Heart left ventricle (tissue), 16 donors: ENCODE measurements at regions of chr3 and their contacts with region 1.

Region 1: GRCh38 chr3:16516695-16517481 is 3.4 kb upstream of the RFTN1 start:
- DNase-seq: peak in 4 of 5 donors; percentile 40 to 61 (median 44)
- ATAC-seq: peak; percentile 23 to 49 (median 35)
- H3K4me3 ChIP-seq: no peak overlapping the region
- H3K27ac ChIP-seq: peak overlapping the region; percentile 8 to 91 (median 65)
- H3K4me1 ChIP-seq: peaks cover 3 to 55% (median 25%) of the 10 kb centered on the region in 12 donors
- H3K27me3 ChIP-seq: no peaks in the 10 kb centered on the region
- CTCF ChIP-seq: peak; percentile 24 to 69 (median 60)
- POLR2A ChIP-seq: no peak

Region 2: DNA sequence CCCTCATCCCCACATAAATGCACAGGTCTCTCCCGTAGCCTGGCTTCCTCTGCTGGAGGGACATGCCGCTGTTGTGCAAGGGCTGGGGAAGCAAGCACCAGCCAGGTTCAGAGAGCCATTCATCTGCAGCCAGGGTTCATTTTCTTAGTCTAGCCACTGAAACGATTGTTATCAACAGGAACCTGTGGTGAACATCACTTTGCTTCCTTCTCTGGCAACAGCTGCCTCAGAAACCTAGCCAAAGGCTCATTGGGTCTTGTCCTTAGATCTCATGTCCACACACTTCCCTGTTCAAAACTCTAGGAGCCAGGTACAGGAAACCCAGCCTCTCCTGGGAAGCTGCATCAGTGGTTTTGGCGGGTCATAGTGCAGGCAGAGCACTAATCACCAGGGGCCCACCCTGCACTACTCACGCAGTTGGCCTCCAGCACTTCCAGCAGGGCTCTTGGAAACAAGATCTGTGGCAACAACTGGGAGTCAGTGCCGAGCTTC is 204.9 kb before region 1 on chr3:
- intact Hi-C with region 1: loop called in 1 of 10 experiments (anchors 1 kb)
- DNase-seq: peak in 4 of 5 donors; percentile 34 to 66 (median 61)
- ATAC-seq: peak; percentile 80 to 94 (median 86)
- H3K4me3 ChIP-seq: no peak overlapping the region
- H3K27ac ChIP-seq: peak overlapping the region; percentile 9 to 80 (median 60)
- H3K4me1 ChIP-seq: peaks cover 0 to 56% (median 11%) of the 10 kb centered on the region in 12 donors
- H3K27me3 ChIP-seq: no peaks in the 10 kb centered on the region
- CTCF ChIP-seq: no peak
- POLR2A ChIP-seq: no peak

Region 3: DNA sequence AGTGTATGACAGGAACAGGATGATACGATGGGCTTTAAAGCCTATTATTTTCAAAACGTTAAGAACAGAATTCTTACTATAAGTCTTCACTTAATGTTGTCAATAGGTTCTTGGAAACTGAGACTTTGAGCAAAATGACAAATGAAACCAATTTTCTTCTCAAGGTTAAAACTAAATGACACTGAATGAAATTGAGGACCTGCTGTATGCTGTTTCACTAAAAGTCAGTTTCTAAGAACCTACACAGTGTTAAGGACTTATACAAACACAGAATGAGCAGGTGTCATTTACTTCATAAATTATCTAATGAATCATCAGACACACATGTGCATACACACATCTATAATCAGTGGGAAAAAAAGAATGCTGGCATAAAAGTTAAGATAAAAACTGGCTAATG is 110.3 kb before region 1 on chr3:
- intact Hi-C with region 1: no loop called
- DNase-seq: no peak
- ATAC-seq: no peak
- H3K4me3 ChIP-seq: no peak overlapping the region
- H3K27ac ChIP-seq: no peak overlapping the region
- H3K4me1 ChIP-seq: peaks cover 0 to 23% (median 9%) of the 10 kb centered on the region in 12 donors
- H3K27me3 ChIP-seq: no peaks in the 10 kb centered on the region
- CTCF ChIP-seq: no peak
- POLR2A ChIP-seq: no peak

Region 4: DNA sequence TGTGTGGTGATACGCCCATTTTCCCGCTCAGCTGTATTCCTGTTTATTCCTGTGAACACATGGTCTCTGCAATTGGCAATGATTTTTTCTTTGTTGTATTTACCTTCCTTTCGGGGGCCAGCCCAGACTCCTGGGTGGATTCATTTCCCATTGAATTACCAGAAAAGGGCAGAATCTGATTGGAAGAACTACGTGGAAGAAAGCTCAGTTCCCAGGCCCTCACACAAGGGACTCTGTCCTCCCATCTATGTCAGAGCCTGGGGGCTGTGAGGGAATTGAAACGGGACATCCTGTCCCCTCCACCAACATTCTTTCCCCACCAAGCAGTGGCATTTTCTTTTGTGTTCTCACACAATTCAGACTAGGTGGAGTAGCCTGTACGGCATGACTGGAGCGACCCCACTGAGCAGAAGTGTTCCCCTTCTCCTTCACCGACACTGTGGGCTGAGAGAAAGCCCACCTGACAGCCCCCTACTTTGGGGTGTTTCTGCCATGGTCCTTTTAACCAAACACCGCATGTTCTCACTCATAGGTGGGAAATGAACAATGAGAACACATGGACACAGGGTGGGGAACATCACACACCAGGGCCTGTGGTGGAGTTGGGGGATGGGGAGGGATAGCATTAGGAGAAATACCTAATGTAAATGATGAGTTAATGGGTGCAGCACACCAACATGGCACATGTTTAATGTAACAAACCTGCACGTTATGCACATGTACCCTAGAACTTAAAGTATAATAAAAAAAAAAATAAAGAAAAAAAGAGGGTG is 28.7 kb after region 1 on chr3:
- intact Hi-C with region 1: loop called in 1 of 10 experiments (anchors 2 kb)
- DNase-seq: peak in 4 of 5 donors; percentile 50 to 53 (median 50)
- ATAC-seq: peak; percentile 62 to 84 (median 78)
- H3K4me3 ChIP-seq: no peak overlapping the region
- H3K27ac ChIP-seq: peak overlapping the region; percentile 52 to 87 (median 82)
- H3K4me1 ChIP-seq: peaks cover 0 to 46% (median 13%) of the 10 kb centered on the region in 12 donors
- H3K27me3 ChIP-seq: peaks cover 0 to 4% (median 0%) of the 10 kb centered on the region in 9 donors
- CTCF ChIP-seq: no peak
- POLR2A ChIP-seq: no peak

Region 5: DNA sequence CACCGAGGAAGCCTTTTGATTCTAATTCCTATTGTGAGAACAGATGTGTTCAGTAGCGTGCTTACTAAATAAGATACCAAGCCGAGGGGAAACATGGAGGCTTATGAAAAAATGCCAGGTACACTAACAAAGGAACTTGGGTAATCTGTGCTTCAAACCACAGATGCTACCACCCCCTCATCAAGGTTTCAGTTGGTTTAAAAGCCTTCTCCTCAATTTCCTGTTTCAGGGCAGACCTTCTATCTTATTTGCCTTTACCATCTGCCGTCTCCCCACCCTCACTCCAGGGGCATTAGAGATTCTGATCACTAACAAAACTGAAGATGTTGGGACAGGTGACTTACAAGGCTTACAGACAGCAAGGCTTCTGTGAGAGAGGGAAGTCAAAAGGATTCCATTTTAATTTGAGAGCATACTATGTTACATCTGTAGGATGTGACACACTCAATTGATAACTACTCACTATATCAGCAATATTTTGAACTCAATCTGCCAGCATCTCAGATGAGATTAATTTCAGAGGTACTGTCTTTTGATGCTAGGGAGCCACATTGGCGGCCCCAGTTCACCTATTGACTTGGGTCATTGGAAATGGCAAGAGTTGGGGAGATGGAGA is 307.3 kb after region 1 on chr3:
- intact Hi-C with region 1: no loop called
- DNase-seq: no peak
- ATAC-seq: no peak
- H3K4me3 ChIP-seq: no peak overlapping the region
- H3K27ac ChIP-seq: no peak overlapping the region
- H3K4me1 ChIP-seq: no peaks in the 10 kb centered on the region
- H3K27me3 ChIP-seq: no peaks in the 10 kb centered on the region
- CTCF ChIP-seq: no peak
- POLR2A ChIP-seq: no peak